ENCODE measurements at regions of chr9 and their contacts with region 1.

Region 1: GRCh38 chr9:71768388-71769174 is at the start of gene CEMIP2:
- DNase-seq: peak in 1 of 2 experiments; percentile 90
- H3K4me3 ChIP-seq: peak within 1 kb of the TSS; percentile 66 to 99 (median 98)
- H3K27ac ChIP-seq: peak within 1 kb of the TSS; percentile 83
- H3K4me1 ChIP-seq: peaks cover 0 to 14% (median 13%) of the 10 kb centered on the region in 4 experiments; a peak in 4 of 7 replicates
- H3K27me3 ChIP-seq: no peaks in the 10 kb centered on the region; a peak in 1 of 7 replicates
- CTCF ChIP-seq: peak; percentile 52 to 82 (median 66)
- EP300 ChIP-seq: no peak
- POLR2A ChIP-seq: peak; percentile 95 to 97
- RAD21 ChIP-seq: peak; percentile 71 to 85
- total RNA-seq, gene CEMIP2: 46.0 and 52.1 TPM in 2 replicates

Region 2: GRCh38 chr9:71683598-71684235 is 84.9 kb before region 1 on chr9:
- CTCF ChIA-PET with region 1: interaction called, 9 read pairs
- POLR2A ChIA-PET with region 1: interaction called, 14 read pairs
- DNase-seq: peak; percentile 51 to 55
- H3K4me3 ChIP-seq: 0 out of 8 replicates have a peak overlapping the region, but pooled peaks of 1 of the 4 experiments have one; percentile 0
- H3K27ac ChIP-seq: no peak overlapping the region; the same call in 1 of the 2 replicates
- H3K4me1 ChIP-seq: peaks cover 0 to 8% (median 5%) of the 10 kb centered on the region in 4 experiments; a peak in 5 of 7 replicates
- H3K27me3 ChIP-seq: no peaks in the 10 kb centered on the region
- CTCF ChIP-seq: peak; percentile 25 to 68 (median 65); a peak in 3 of 4 replicates
- EP300 ChIP-seq: no peak
- POLR2A ChIP-seq: no peak
- RAD21 ChIP-seq: peak; percentile 67 to 73

Region 3: GRCh38 chr9:71752928-71753327 is 15.7 kb before region 1 on chr9:
- CTCF ChIA-PET with region 1: interaction called, 9 read pairs
- POLR2A ChIA-PET with region 1: interaction called, 21 read pairs
- DNase-seq: no peak
- H3K4me3 ChIP-seq: peak overlapping the region in 1 of 4 experiments; percentile 10; a peak in 2 of 8 replicates
- H3K27ac ChIP-seq: no peak overlapping the region
- H3K4me1 ChIP-seq: peaks cover 2 to 17% (median 6%) of the 10 kb centered on the region in 4 experiments; a peak in 5 of 7 replicates
- H3K27me3 ChIP-seq: no peaks in the 10 kb centered on the region
- CTCF ChIP-seq: no peak
- EP300 ChIP-seq: no peak
- POLR2A ChIP-seq: no peak
- RAD21 ChIP-seq: no peak